Posterior vena cava (tissue), 2 donors: ENCODE measurements at regions of chr5 and their contacts with region 1.

Region 1: GRCh38 chr5:81233080-81233634 is at the start of gene CKMT2:
- DNase-seq: peak; percentile 92
- total RNA-seq, gene CKMT2: 18.6 to 26.3 TPM

Region 2: GRCh38 chr5:81292130-81292529 is 59.0 kb after region 1 on chr5:
- intact Hi-C with region 1: loop called in 1 of 2 experiments (anchors 10 kb)
- DNase-seq: no peak

Region 3: GRCh38 chr5:81579262-81579924 is 346.2 kb after region 1 on chr5:
- intact Hi-C with region 1: no loop called
- DNase-seq: no peak